Activated CD4-positive, alpha-beta memory T cell treated with anti-CD3 and anti-CD28 coated beads, Interleukin-2, amount 10 ng/mL, durations not matched to agents 7 days and 5 days (primary cell): ENCODE measurements at regions of chr11 and their contacts with region 1.

Region 1: GRCh38 chr11:47152953-47153950 is 23.4 kb downstream of the ARFGAP2 start:
- DNase-seq: peak; percentile 57
- H3K4me3 Mint-ChIP-seq: no peak overlapping the region
- H3K27ac Mint-ChIP-seq: no peak overlapping the region
- H3K4me1 Mint-ChIP-seq: peaks cover 26% of the 10 kb centered on the region
- H3K27me3 Mint-ChIP-seq: no peaks in the 10 kb centered on the region

Region 2: GRCh38 chr11:46865340-46865739 is 287.9 kb before region 1 on chr11:
- CTCF ChIA-PET with region 1: no interaction called
- POLR2A ChIA-PET with region 1: no interaction called
- DNase-seq: no peak
- H3K4me3 Mint-ChIP-seq: no peak overlapping the region
- H3K27ac Mint-ChIP-seq: no peak overlapping the region
- H3K4me1 Mint-ChIP-seq: no peaks in the 10 kb centered on the region
- H3K27me3 Mint-ChIP-seq: peaks cover 24% of the 10 kb centered on the region

Region 3: DNA sequence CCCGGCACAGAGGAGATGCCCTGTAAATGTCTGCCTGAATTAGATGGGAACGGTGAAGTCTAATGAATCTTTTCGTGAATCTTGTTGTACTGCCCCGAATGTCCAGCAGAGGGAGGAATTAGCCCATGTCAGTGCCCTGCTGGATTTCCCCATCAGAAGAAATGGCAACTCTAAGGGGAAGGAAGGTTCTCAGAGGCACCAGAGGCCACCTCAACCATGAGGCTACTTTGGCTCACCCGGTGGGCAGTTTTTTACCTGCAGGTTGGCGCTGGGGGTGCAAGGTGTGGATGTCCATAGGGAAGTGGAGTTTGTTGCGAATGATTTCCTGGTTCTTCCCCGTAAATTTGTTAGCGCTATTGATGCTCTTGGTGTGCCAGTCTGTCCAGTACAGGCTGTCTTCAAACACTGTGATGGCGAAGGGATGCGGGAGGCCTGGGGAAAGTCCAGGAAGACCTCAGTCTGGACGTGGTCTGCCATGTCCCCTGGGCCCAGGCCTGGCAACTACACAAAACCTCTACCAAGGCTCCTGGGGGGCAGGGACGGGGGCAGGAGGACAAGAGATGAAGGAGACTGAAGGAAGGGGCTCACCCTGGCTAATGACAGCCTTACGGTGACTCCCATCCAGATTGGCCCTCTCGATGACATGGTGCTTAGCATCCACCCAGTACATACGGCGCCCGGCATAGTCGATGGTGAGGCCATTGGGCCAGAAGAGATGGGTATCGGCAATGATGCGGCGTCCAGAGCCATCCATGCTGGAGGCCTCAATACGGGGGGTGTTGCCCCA is 263.4 kb before region 1 on chr11:
- CTCF ChIA-PET with region 1: interaction called, 23 read pairs
- POLR2A ChIA-PET with region 1: no interaction called
- DNase-seq: peak; percentile 72
- H3K4me3 Mint-ChIP-seq: no peak overlapping the region
- H3K27ac Mint-ChIP-seq: no peak overlapping the region
- H3K4me1 Mint-ChIP-seq: no peaks in the 10 kb centered on the region
- H3K27me3 Mint-ChIP-seq: peaks cover 4% of the 10 kb centered on the region

Region 4: DNA sequence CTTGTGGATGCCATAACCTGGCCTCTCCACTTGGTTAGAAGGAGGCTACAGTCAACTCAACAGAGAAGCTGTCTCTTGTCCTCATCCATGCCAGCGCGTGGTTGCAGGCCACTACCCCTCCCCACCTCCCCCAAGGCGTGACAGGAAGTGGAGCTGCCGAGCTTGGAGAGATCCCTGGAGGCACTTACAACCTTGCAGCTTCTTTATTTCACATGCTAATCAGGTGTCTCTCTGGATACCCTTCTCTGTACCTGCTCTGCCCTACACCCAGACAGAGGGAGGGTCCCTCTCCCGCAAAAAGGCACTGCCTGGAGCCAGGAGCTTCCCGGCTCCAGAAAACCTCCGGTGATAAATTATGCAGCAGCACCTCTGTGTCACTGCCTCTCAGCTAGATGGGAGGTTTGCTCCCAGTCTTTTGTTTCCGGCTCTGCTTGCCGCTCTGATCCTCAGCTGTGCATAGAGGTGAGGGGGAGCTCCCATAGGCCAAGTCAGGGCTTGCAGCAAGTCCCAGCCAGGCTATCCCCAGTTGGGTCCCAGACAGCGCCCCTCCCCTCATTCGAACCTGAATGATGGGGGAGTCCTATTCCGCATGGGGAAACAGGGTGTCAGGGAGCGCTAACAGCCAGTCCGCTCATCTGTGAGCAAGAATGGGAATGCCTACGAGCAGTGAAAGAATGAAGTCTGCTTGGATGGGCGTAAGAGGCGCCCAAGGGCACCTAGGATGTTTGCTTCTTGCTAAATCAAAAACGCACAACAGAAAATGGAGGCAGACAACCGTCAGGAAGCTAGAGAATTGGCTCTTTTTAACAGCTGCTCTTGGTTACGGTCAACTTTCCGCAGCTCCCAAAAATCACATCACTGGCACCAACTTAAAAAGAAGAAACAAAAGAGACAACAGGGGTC is 240.5 kb before region 1 on chr11:
- CTCF ChIA-PET with region 1: interaction called, 12 read pairs
- POLR2A ChIA-PET with region 1: no interaction called
- DNase-seq: no peak
- H3K4me3 Mint-ChIP-seq: no peak overlapping the region
- H3K27ac Mint-ChIP-seq: no peak overlapping the region
- H3K4me1 Mint-ChIP-seq: peaks cover 14% of the 10 kb centered on the region
- H3K27me3 Mint-ChIP-seq: peaks cover 69% of the 10 kb centered on the region

Region 5: GRCh38 chr11:46918083-46918787 is 235.0 kb before region 1 on chr11 and contains the start of gene LRP4:
- CTCF ChIA-PET with region 1: interaction called, 12 read pairs
- POLR2A ChIA-PET with region 1: no interaction called
- DNase-seq: peak; percentile 35
- H3K4me3 Mint-ChIP-seq: peak within 1 kb of the TSS; percentile 56
- H3K27ac Mint-ChIP-seq: no peak within 1 kb of the TSS
- H3K4me1 Mint-ChIP-seq: peaks cover 29% of the 10 kb centered on the region
- H3K27me3 Mint-ChIP-seq: peaks cover 58% of the 10 kb centered on the region
- total RNA-seq, gene LRP4: 0.05 TPM in 1 of 2 experiments, not detected in the other